Endothelial cell of umbilical vein (primary cell): ENCODE measurements at regions of chr10 and their contacts with region 1.

Region 1: DNA sequence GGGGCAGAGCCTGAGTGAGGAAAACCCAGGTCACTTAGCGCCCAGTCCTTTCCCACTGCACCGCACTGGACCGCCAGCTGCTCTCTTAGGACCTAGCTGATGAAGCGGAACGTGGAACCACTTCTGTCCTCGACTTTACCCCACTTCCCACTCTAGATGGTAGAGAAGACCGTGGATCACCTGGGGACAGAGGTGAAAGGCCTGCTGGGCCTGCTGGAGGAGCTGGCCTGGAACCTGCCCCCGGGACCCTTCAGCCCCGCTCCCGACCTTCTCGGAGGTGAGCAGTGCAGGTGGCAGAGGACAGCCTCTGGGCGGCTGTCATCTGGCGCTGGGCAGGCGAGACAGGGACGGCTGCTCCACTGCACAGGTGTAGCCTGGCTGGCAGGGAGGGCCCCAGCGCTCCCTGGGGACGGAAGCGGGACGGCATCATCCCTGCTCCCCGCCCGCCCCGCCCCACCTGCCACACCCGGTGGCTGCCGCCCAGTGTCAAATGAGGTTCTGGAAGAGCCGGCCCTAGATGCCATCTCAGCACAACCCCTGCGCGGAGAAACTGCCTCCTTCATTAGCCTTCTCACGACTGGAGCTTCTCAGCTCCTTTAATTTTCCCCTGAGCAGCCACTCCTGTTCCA is 11.7 kb downstream of the PLAC9 start:
- DNase-seq: no peak
- H3K4me3 ChIP-seq: no peak overlapping the region
- H3K27ac ChIP-seq: no peak overlapping the region
- H3K4me1 ChIP-seq: peaks cover 8% of the 10 kb centered on the region
- H3K27me3 ChIP-seq: no peaks in the 10 kb centered on the region
- CTCF ChIP-seq: no peak
- POLR2A ChIP-seq: peak; percentile 25

Region 2: DNA sequence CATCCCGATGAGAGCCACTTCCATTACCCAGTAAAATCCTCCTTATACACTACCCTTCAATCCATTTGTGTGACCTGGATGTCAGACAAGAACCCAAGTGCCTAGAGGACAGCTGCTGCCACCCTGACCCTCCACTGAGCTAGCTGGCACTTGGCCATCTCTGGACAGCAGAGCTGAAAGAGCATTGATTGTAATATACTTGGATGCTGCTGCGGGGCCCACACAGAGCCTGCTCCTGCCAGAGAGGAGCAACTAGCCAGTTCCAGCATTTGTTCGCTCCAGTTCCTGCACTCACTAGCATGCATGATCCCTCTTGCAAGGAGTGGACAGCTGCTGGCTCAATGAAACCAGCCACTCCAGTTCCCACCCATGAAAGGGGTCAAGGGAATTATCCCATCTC is 74.1 kb before region 1 on chr10:
- CTCF ChIA-PET with region 1: no interaction called
- POLR2A ChIA-PET with region 1: no interaction called
- dilution Hi-C with region 1: no loop called
- intact Hi-C with region 1: no loop called
- DNase-seq: no peak
- H3K4me3 ChIP-seq: no peak overlapping the region
- H3K27ac ChIP-seq: no peak overlapping the region
- H3K4me1 ChIP-seq: no peaks in the 10 kb centered on the region
- H3K27me3 ChIP-seq: no peaks in the 10 kb centered on the region
- CTCF ChIP-seq: no peak
- POLR2A ChIP-seq: no peak

Region 3: GRCh38 chr10:80158598-80159127 is 14.5 kb after region 1 on chr10:
- CTCF ChIA-PET with region 1: interaction called, 22 read pairs
- POLR2A ChIA-PET with region 1: no interaction called
- dilution Hi-C with region 1: no loop called
- intact Hi-C with region 1: loop called (anchors 1 kb)
- DNase-seq: peak; percentile 96
- H3K4me3 ChIP-seq: no peak overlapping the region
- H3K27ac ChIP-seq: peak overlapping the region; percentile 21
- H3K4me1 ChIP-seq: peaks cover 17% of the 10 kb centered on the region
- H3K27me3 ChIP-seq: no peaks in the 10 kb centered on the region
- CTCF ChIP-seq: no peak
- POLR2A ChIP-seq: no peak

Region 4: GRCh38 chr10:80177781-80178540 is 33.8 kb after region 1 on chr10:
- CTCF ChIA-PET with region 1: interaction called, 11 read pairs
- POLR2A ChIA-PET with region 1: no interaction called
- dilution Hi-C with region 1: no loop called
- intact Hi-C with region 1: no loop called
- DNase-seq: no peak
- H3K4me3 ChIP-seq: no peak overlapping the region
- H3K27ac ChIP-seq: no peak overlapping the region
- H3K4me1 ChIP-seq: no peaks in the 10 kb centered on the region
- H3K27me3 ChIP-seq: no peaks in the 10 kb centered on the region
- CTCF ChIP-seq: no peak
- POLR2A ChIP-seq: no peak

Region 5: GRCh38 chr10:80205478-80206276 is 61.5 kb after region 1 on chr10 and contains the start of gene ANXA11:
- CTCF ChIA-PET with region 1: interaction called, 20 read pairs
- POLR2A ChIA-PET with region 1: no interaction called
- dilution Hi-C with region 1: no loop called
- intact Hi-C with region 1: loop called (anchors 1 kb)
- DNase-seq: peak; percentile 62
- H3K4me3 ChIP-seq: peak within 1 kb of the TSS; percentile 16 to 71 (median 50)
- H3K27ac ChIP-seq: peak within 1 kb of the TSS; percentile 87
- H3K4me1 ChIP-seq: peaks cover 38% of the 10 kb centered on the region
- H3K27me3 ChIP-seq: no peaks in the 10 kb centered on the region
- CTCF ChIP-seq: no peak
- POLR2A ChIP-seq: peak; percentile 62
- total RNA-seq, gene ANXA11: 122 and 143 TPM in 2 replicates